ENCODE measurements at regions of chr18 and their contacts with region 1.

Region 1: DNA sequence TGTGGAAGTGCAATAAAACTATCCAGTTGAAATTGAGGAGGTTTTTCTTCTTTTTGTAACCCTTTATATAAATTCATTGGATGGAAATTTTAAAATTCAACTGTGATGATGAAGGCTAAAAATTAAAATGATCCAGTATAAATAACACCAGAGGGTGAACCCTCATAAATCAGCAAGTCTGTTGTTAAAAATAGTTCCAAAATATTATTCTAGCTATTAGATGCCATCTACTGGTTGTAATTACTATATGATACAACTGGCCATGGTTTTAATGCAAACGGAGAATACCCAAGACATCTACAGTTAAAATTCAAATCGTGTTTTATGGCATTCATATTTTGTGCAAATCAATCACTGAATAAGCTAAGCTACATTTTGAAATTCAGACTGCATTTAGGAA is 53.8 kb downstream of the TMEM200C start:
- DNase-seq: no peak
- H3K4me3 ChIP-seq: no peak overlapping the region
- H3K27ac ChIP-seq: no peak overlapping the region
- H3K4me1 ChIP-seq: no peaks in the 10 kb centered on the region
- H3K27me3 ChIP-seq: no peaks in the 10 kb centered on the region
- CTCF ChIP-seq: no peak
- EP300 ChIP-seq: no peak
- POLR2A ChIP-seq: no peak

Region 2: GRCh38 chr18:5600378-5601071 is 241.0 kb before region 1 on chr18:
- in situ Hi-C with region 1: loop called in 1 of 4 experiments (anchors 25 kb)
- intact Hi-C with region 1: no loop called
- DNase-seq: no peak
- H3K4me3 ChIP-seq: no peak overlapping the region
- H3K27ac ChIP-seq: no peak overlapping the region
- H3K4me1 ChIP-seq: peaks cover 0 to 11% (median 3%) of the 10 kb centered on the region in 4 donors
- H3K27me3 ChIP-seq: no peaks in the 10 kb centered on the region
- CTCF ChIP-seq: peak; percentile 25 to 37 (median 33)
- EP300 ChIP-seq: no peak
- POLR2A ChIP-seq: no peak

Region 3: GRCh38 chr18:6333981-6334380 is 492.5 kb after region 1 on chr18:
- in situ Hi-C with region 1: no loop called
- intact Hi-C with region 1: no loop called
- DNase-seq: no peak
- H3K4me3 ChIP-seq: no peak overlapping the region
- H3K27ac ChIP-seq: no peak overlapping the region
- H3K4me1 ChIP-seq: no peaks in the 10 kb centered on the region
- H3K27me3 ChIP-seq: no peaks in the 10 kb centered on the region
- CTCF ChIP-seq: no peak
- EP300 ChIP-seq: no peak
- POLR2A ChIP-seq: no peak